Dorsolateral prefrontal cortex (tissue), 120 donors: ENCODE measurements at regions of chr4 and their contacts with region 1.

Region 1: GRCh38 chr4:88706574-88706973 is 8.9 kb upstream of the NAP1L5 start:
- DNase-seq: peak in 4 of 10 donors; percentile 45 to 63 (median 58)
- H3K4me3 ChIP-seq: peak overlapping the region in 19 of 59 donors; percentile 2 to 35 (median 12)
- H3K27ac ChIP-seq: peak overlapping the region; percentile 2 to 88 (median 75)
- H3K27me3 ChIP-seq: no peaks in the 10 kb centered on the region
- CTCF ChIP-seq: peak; percentile 28 to 83 (median 68)

Region 2: GRCh38 chr4:88791274-88791673 is 84.7 kb after region 1 on chr4:
- intact Hi-C with region 1: loop called in 1 of 2 experiments (anchors 2 kb)
- DNase-seq: no peak
- H3K4me3 ChIP-seq: no peak overlapping the region
- H3K27ac ChIP-seq: peak overlapping the region in 40 of 59 donors; percentile 3 to 86 (median 72)
- H3K27me3 ChIP-seq: no peaks in the 10 kb centered on the region
- CTCF ChIP-seq: peak in 43 of 56 donors; percentile 10 to 52 (median 32)

Region 3: DNA sequence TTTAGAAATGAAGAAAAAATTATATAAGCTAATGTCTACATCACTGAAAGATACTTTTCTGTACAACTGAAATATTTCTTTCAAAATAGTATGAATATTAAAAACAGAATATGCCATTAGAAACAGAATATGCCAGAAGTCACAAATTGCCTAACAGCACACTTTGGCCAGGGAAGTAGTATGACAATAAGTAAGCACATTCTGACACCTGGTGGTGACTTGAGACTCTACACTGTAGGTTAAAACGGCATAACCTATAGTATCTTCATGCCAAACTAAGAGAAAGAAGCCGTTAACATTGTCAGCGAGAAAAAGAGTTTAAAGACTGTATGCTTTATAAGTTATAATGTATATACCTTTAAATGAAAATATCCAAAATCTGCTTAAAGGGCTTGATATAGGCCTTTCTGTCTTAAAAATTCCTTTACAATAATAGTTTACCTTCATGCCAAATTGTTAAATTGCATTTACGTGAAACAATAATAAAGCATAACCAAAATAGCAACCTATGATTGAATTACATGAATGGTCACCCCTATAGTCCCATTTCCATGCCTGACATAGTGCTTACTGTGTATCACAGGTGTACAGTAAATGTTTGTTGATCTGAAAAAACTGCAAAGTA is 317.6 kb after region 1 on chr4:
- intact Hi-C with region 1: loop called (anchors 2 to 10 kb)
- DNase-seq: peak in 3 of 10 donors; percentile 25 to 63 (median 53)
- H3K4me3 ChIP-seq: peak overlapping the region in 1 of 59 donors; percentile 5
- H3K27ac ChIP-seq: no peak overlapping the region
- H3K27me3 ChIP-seq: no peaks in the 10 kb centered on the region
- CTCF ChIP-seq: peak; percentile 78 to 99 (median 92)